ENCODE measurements at regions of chr2 and their contacts with region 1.

Region 1: DNA sequence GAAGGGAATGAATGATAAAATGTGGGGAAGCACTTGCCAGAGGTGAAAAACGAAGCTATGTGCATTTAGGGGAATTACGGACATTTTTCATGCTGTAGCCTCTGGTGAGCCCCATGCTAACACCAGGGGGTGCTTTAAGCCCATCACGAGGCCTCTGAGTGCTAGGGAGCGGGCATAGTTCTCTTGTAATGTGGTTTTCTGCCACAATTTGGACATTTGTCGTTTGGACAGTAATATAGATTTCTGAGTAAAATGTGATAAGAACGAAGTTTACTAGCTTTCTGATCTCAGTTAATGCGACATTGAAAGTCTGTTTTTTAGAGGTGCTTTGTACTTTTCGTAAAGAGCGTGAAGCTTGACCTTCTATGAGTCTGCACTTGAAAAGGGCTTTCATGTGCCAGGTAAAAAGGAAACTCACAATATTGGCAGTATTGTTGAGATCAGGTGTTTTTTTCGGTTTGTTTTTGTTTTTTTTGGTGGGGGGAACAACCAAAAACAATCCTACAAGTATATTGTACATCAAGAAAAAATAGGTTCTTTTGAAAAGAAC is 50.6 kb downstream of the TRAF3IP1 start:
- H3K4me3 Mint-ChIP-seq: no peak overlapping the region
- H3K27ac Mint-ChIP-seq: no peak overlapping the region
- H3K4me1 Mint-ChIP-seq: peaks cover 28% of the 10 kb centered on the region
- H3K27me3 Mint-ChIP-seq: no peaks in the 10 kb centered on the region

Region 2: GRCh38 chr2:238383743-238384380 is 13.0 kb after region 1 on chr2:
- intact Hi-C with region 1: loop called (anchors 2 kb)
- H3K4me3 Mint-ChIP-seq: no peak overlapping the region
- H3K27ac Mint-ChIP-seq: peak overlapping the region; percentile 55
- H3K4me1 Mint-ChIP-seq: peaks cover 65% of the 10 kb centered on the region
- H3K27me3 Mint-ChIP-seq: no peaks in the 10 kb centered on the region

Region 3: DNA sequence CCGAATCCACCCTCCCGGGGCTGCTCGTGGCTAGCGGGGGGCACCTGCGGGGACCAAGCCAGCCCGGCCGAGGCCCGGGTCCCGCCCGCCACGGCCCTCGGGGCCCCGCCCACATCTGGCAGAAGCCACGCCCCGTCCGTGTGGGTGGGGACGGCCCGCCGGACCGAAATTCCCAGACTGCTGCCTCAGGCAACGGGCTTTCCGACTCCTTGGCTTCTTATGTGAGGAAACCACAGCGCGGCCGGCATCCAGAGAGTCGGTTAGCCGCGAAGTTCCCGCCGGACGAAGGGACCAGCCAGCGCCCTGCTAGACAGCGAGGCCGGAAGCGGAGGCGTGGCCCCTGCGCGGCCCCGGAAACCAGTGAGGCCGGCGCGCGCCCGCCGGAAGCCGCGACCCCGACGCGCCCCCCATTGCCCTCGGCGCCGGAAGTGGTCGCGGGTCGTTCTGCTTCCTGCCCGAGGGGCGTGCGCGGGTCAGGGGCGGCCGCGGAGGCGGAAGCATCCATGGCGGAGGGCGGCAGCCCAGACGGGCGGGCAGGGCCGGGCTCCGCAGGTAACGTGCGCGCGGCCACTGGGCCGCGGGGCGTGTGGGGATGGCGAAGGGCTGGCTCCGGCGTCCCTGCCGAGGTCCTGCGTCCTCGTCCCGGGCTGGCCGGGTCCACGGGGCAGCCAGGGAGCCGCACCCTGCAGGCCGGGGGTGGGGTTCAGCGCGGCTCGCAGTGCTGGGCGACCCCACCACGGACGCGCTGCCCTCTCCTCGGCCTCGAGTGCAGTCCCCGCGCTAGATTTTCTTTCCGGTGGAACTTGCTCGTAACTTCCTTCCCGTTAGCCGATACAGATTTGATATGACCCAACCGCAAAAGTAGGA is 55.9 kb after region 1 on chr2 and contains the start of gene ASB1:
- intact Hi-C with region 1: loop called (anchors 10 kb)
- H3K4me3 Mint-ChIP-seq: peak within 1 kb of the TSS; percentile 83
- H3K27ac Mint-ChIP-seq: peak within 1 kb of the TSS; percentile 87
- H3K4me1 Mint-ChIP-seq: peaks cover 45% of the 10 kb centered on the region
- H3K27me3 Mint-ChIP-seq: peaks cover 7% of the 10 kb centered on the region

Region 4: DNA sequence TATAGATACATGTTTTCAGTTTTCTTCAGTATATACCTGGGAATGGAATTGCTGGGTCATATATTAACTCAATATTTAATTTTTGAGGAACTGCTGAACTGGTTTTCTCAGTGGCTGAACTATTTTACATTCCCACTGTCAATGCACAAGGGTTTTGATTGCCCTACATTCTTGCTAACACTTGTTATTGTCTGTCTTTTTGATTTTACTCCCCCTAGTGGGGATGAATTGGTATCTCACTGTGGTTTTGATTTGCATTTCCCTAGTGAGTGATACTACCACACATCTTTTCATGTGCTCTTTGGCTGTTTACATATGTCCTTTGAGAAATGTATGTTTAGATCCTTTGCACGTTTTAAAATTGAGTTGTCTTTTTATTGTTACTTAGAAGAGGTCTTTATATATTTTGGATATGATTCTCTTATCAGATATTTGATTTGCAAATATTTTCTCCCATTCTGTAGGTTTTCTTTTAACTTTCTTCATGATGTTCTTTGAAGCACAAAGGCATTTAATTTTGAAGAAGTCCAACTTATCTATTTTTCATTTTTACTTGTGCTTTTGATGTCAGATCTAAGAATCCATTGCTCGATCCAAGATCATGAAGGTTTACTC is 92.0 kb after region 1 on chr2:
- intact Hi-C with region 1: loop called (anchors 1 kb)
- H3K4me3 Mint-ChIP-seq: no peak overlapping the region
- H3K27ac Mint-ChIP-seq: no peak overlapping the region
- H3K4me1 Mint-ChIP-seq: no peaks in the 10 kb centered on the region
- H3K27me3 Mint-ChIP-seq: no peaks in the 10 kb centered on the region

Region 5: GRCh38 chr2:238629064-238629463 is 258.2 kb after region 1 on chr2:
- intact Hi-C with region 1: loop called (anchors 10 kb)
- H3K4me3 Mint-ChIP-seq: no peak overlapping the region
- H3K27ac Mint-ChIP-seq: no peak overlapping the region
- H3K4me1 Mint-ChIP-seq: no peaks in the 10 kb centered on the region
- H3K27me3 Mint-ChIP-seq: peaks cover 3% of the 10 kb centered on the region

Measured in dendritic cell treated with granulocyte-macrophage colony-stimulating factor and Interleukin-4, amounts not matched to agents 40 ng/mL and 50 ng/mL, for 4 days (primary cell).